BJ (cell line): ENCODE measurements at regions of chr10 and their contacts with region 1.

Region 1: GRCh38 chr10:93376372-93377293 is 105.5 kb downstream of the MYOF start:
- DNase-seq: peak; percentile 84
- H3K4me3 ChIP-seq: no peak overlapping the region
- H3K27me3 ChIP-seq: no peaks in the 10 kb centered on the region
- CTCF ChIP-seq: peak; percentile 84

Region 2: GRCh38 chr10:93288654-93289634 is 87.7 kb before region 1 on chr10:
- CTCF ChIA-PET with region 1: no interaction called
- POLR2A ChIA-PET with region 1: no interaction called
- DNase-seq: peak; percentile 87
- H3K4me3 ChIP-seq: no peak overlapping the region
- H3K27me3 ChIP-seq: no peaks in the 10 kb centered on the region
- CTCF ChIP-seq: peak; percentile 79

Region 3: GRCh38 chr10:93392121-93392520 is 15.5 kb after region 1 on chr10:
- CTCF ChIA-PET with region 1: interaction called, 10 read pairs
- POLR2A ChIA-PET with region 1: no interaction called
- DNase-seq: no peak
- H3K4me3 ChIP-seq: no peak overlapping the region
- H3K27me3 ChIP-seq: no peaks in the 10 kb centered on the region
- CTCF ChIP-seq: no peak

Region 4: GRCh38 chr10:93437088-93437945 is 60.7 kb after region 1 on chr10:
- CTCF ChIA-PET with region 1: interaction called, 29 read pairs
- POLR2A ChIA-PET with region 1: no interaction called
- DNase-seq: peak; percentile 99
- H3K4me3 ChIP-seq: no peak overlapping the region
- H3K27me3 ChIP-seq: no peaks in the 10 kb centered on the region
- CTCF ChIP-seq: no peak

Region 5: DNA sequence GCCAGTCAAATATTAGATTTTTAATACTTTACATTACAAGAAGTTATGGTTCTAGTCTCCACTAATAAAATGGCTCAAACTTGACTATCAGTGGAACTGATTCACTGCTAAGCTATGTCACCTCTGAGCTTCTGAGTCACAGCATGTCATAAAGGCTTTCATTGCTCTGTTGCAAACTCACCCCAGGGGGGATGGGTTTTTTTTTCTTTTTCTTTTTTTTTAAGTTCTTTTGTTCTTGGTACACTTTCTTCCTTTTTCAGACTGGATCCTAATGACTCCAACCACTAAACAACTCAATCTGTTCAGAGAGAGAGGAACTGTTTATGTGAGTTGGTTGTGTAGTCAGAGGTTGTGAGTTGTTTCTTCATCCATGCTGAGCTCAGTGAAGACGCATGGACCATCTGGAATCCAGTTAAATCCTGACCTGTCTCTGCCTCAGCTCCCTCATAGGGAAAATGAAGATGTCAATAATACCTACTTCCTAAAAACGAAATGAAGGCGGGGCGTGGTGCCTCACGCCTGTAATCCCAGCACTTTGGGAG is 94.5 kb after region 1 on chr10:
- CTCF ChIA-PET with region 1: interaction called, 14 read pairs
- POLR2A ChIA-PET with region 1: interaction called, 7 read pairs
- DNase-seq: peak; percentile 98
- H3K4me3 ChIP-seq: no peak overlapping the region
- H3K27me3 ChIP-seq: no peaks in the 10 kb centered on the region
- CTCF ChIP-seq: no peak

Region 6: GRCh38 chr10:93515071-93516005 is 138.7 kb after region 1 on chr10:
- CTCF ChIA-PET with region 1: interaction called, 10 read pairs
- POLR2A ChIA-PET with region 1: no interaction called
- DNase-seq: no peak
- H3K4me3 ChIP-seq: no peak overlapping the region
- H3K27me3 ChIP-seq: no peaks in the 10 kb centered on the region
- CTCF ChIP-seq: no peak